Cardiac septum (tissue), 1 donor: ENCODE measurements at regions of chr20 and their contacts with region 1.

Region 1: DNA sequence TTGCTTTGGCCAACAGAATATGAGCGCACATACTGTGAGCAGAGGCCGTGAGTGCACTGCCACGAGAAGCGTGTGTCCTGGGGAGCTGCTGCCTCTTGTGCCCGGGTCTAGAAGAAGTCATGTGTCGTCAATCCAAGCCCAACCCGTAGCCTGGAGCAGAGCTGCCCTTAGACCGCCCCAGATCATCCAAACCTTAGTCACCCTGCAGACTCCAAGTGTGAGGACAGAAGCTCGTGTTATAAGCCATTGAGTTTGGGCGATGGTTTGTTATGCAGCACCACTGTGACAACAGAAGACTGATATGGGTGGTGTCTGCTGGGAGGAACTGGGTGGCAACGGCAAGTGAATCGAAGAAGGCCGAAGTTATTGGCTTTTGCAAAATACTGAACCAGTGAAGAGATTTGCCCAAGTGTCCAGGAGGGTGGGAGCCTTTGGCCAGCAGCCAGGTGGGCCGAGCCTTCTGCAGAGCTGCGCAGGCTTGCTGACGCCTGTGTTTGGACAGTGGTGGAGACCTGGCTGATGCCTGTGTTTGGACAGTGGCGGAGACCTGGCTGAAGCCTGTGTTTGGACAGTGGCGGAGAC is 101.3 kb upstream of the SULF2 start:
- DNase-seq: no peak

Region 2: DNA sequence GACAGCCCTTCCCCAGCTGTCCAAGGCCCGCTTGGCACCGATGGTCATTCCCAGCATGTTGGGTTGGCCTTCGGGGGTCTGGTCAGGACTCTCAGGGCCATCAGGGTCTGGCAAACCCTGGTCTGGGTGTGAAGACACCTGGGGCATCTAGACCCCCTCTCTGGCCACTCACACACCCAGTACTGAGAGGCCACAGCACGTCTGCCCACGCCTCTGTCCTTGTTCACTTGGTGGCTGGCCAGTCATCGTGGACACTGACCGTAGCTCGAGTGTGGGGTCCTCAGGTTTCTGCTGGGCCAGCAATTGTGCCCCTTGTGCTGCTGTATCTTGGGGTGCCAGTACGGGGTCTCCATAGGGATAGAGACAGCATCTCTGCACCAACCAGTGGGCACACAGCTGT is 47.4 kb before region 1 on chr20:
- intact Hi-C with region 1: loop called (anchors 5 kb)
- DNase-seq: peak; percentile 49

Region 3: DNA sequence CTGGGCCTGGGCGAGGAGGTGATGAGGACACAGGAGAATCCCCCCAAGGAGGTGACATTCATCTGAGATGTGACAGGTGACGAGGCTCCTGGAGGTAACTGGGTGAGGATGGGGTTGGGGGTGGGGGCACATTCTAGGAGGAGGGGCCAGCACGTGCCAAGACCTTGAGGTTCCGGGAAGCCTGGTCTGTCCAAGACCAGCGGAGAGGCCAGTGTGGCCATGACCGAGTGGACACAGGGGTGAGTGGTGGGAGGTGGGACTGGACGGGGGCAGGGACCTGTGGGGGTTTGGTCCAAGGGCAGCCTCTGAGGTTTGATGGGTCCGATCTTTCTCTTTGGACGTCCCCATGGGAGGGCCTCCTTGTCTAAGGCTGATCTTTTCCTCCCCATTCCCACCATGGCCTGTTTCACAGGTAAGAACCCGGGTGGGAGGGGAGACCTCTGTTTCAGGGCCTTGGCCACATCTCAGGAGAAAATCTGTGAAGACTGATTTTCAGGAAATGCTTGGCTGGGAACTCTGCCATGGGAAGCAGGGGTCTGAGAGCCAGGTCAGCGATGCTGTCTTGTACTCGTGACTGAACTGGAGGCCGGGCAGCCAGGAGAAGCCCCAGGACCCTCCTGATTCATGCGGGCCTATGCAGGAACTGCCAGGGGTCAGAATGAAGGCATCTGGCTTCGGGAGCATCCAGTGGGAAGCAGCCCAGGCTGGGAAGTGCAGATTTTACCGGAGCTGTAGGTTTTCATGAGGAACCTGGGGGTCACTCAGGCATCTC is 11.4 kb before region 1 on chr20:
- intact Hi-C with region 1: no loop called
- DNase-seq: no peak